GM12878 (cell line): ENCODE measurements at regions of chr16 and their contacts with region 1.

Region 1: GRCh38 chr16:11407047-11407982 is 62.1 kb downstream of the RMI2 start:
- DNase-seq: peak; percentile 45
- ATAC-seq: peak; percentile 74
- H3K4me3 ChIP-seq: no peak overlapping the region
- H3K27ac ChIP-seq: no peak overlapping the region
- H3K4me1 ChIP-seq: no peaks in the 10 kb centered on the region
- H3K27me3 ChIP-seq: no peaks in the 10 kb centered on the region; a peak in 2 of 4 replicates
- CTCF ChIP-seq: peak; percentile 75 to 86 (median 83)
- EP300 ChIP-seq: no peak
- POLR2A ChIP-seq: no peak
- RAD21 ChIP-seq: peak; percentile 88

Region 2: DNA sequence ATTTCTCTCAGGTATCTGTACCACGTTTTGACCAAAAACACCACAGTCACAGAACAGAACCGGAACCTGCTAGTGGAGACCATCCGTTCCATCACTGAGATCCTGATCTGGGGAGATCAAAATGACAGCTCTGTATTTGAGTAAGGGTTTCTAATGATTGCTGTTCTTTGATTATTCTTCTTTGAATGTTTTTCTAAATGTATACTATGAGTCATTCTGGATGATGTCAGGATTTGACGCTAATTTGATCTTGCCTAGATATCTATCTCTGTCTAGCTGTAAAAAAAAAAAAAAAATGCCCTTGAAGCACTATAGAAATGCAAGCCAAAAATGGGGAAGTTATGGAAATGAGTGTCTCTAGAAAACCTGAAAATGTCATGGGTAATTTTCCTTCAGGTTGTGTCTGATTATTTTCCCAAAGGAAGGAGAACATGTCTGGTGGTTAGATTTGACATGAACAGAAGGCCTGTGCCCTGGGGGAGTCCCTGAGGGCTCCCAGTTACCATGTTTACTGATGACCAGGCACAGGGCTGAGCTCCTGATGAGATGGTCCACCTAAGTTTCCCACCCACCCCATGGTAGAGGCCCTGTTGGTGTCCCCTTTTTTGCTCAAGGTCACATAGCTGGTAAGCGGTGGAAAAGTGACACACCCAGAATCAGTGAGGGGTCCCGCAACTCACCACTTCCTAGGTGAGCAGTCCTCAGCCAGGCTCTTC is 449.4 kb before region 1 on chr16:
- CTCF ChIA-PET with region 1: interaction called, 33 read pairs
- POLR2A ChIA-PET with region 1: no interaction called
- RAD21 ChIA-PET with region 1: interaction called, 27 read pairs
- SMC1A ChIA-PET with region 1: interaction called, 22 read pairs
- in situ Hi-C with region 1: no loop called
- intact Hi-C with region 1: loop called (anchors 5 kb)
- DNase-seq: no peak
- ATAC-seq: peak; percentile 75
- H3K4me3 ChIP-seq: no peak overlapping the region
- H3K27ac ChIP-seq: peak overlapping the region; percentile 70
- H3K4me1 ChIP-seq: peaks cover 34% of the 10 kb centered on the region
- H3K27me3 ChIP-seq: no peaks in the 10 kb centered on the region
- CTCF ChIP-seq: no peak
- EP300 ChIP-seq: peak; percentile 30 to 47; a peak in 2 of 4 replicates
- POLR2A ChIP-seq: no peak
- RAD21 ChIP-seq: no peak

Region 3: DNA sequence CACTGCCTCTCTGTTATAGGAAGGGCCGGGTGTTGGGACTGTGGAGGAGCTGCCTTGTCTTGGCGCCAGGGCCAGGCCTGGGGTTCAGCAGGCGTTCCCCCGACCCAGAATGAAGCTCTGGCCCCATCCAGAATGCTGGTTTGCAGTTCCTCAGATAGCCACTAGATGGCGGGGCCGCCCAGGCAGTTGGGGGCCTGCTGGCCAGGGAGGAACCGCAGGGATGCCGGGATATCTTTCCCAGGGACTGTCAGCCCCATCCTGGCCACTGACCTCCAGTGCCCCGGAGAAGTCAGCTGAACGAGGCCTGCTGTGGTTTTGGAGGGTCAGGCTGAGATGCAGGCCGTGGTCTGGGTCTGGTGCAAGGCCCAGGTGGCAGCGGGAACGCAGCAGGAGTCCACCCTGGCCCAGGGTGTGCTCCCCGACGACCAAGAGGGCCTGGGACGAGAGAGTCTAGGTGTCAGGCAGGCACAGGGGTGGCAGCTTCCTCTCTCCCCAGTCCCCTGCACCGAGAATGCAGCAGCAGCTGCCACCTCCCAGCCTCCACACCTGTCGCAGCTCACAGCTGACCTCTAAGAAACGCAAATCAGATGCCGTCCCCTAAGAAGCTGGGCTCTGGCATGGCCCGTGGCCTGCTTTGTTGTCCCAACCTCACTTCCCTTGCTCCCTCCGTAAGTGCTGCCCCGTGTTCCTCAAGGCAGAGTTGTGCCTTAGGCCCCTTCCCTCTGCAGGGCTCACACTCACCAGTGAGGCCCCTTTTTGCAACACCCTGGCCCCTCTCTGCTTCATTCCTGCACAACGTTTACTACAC is 10.9 kb before region 1 on chr16:
- CTCF ChIA-PET with region 1: interaction called, 76 read pairs
- POLR2A ChIA-PET with region 1: no interaction called
- RAD21 ChIA-PET with region 1: interaction called, 9 read pairs
- SMC1A ChIA-PET with region 1: interaction called, 21 read pairs
- in situ Hi-C with region 1: no loop called
- intact Hi-C with region 1: no loop called
- DNase-seq: no peak
- ATAC-seq: peak; percentile 90
- H3K4me3 ChIP-seq: no peak overlapping the region
- H3K27ac ChIP-seq: no peak overlapping the region
- H3K4me1 ChIP-seq: no peaks in the 10 kb centered on the region
- H3K27me3 ChIP-seq: no peaks in the 10 kb centered on the region; a peak in 1 of 4 replicates
- CTCF ChIP-seq: peak; percentile 97 to 98 (median 97); a peak in 5 of 6 replicates
- EP300 ChIP-seq: no peak
- POLR2A ChIP-seq: no peak
- RAD21 ChIP-seq: peak; percentile 97

Region 4: GRCh38 chr16:11530171-11530940 is 123.0 kb after region 1 on chr16:
- CTCF ChIA-PET with region 1: interaction called, 80 read pairs
- POLR2A ChIA-PET with region 1: no interaction called
- RAD21 ChIA-PET with region 1: interaction called, 17 read pairs
- SMC1A ChIA-PET with region 1: interaction called, 52 read pairs
- in situ Hi-C with region 1: no loop called
- intact Hi-C with region 1: loop called (anchors 2 kb)
- DNase-seq: no peak
- ATAC-seq: no peak
- H3K4me3 ChIP-seq: no peak overlapping the region
- H3K27ac ChIP-seq: no peak overlapping the region
- H3K4me1 ChIP-seq: no peaks in the 10 kb centered on the region
- H3K27me3 ChIP-seq: peaks cover 0 to 4% of the 10 kb centered on the region in 2 experiments; a peak in 2 of 4 replicates
- CTCF ChIP-seq: no peak
- EP300 ChIP-seq: no peak
- POLR2A ChIP-seq: no peak
- RAD21 ChIP-seq: no peak

Region 5: DNA sequence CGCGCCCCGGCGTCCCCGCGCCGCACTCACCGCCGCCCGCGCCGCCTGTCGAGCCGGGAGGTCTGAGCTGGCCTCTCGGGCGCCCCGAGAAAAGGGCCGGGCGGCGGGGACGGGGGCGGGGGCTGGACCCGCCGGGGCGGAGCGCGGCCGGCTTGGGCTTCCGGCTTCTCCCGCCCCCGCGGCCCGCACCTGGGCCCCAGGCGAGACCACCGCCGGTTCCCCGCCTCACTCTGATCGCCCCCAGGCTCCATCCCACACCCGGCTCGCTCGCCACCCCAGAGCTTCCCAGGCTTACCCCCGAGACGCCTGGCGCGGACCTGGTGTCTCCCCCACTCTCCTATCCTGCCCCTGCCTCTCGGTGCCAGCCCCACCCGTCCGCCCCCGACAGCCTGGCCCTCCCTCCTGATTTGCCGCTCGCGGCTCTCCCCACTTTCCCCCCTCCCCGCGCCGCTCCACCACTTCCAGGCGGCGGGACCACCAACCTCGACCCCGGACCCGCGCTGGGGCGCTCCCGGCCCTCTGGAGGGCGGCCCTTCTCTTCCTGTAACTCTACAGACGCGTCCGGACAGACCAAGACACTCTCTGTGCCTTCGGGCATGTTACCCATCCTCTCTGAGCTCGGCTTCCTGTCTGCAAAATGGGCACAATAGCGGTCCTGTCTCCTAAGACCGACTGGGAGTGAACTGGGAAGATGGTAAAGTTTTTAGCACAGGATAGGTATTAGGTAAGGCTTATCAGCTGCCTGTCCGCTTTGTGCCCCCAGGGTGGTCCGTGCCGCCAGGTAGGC is 179.7 kb after region 1 on chr16 and contains the start of gene LITAF:
- CTCF ChIA-PET with region 1: interaction called, 22 read pairs
- POLR2A ChIA-PET with region 1: no interaction called
- RAD21 ChIA-PET with region 1: interaction called, 16 read pairs
- SMC1A ChIA-PET with region 1: interaction called, 8 read pairs
- in situ Hi-C with region 1: no loop called
- intact Hi-C with region 1: no loop called
- DNase-seq: no peak
- ATAC-seq: peak; percentile 78
- H3K4me3 ChIP-seq: peak within 1 kb of the TSS; percentile 97
- H3K27ac ChIP-seq: peak within 1 kb of the TSS; percentile 92
- H3K4me1 ChIP-seq: peaks cover 10% of the 10 kb centered on the region; the same call in 1 of the 2 replicates
- H3K27me3 ChIP-seq: no peaks in the 10 kb centered on the region
- CTCF ChIP-seq: peak in 1 of 3 experiments; percentile 19; a peak in 1 of 6 replicates
- EP300 ChIP-seq: no peak
- POLR2A ChIP-seq: peak; percentile 81
- RAD21 ChIP-seq: peak; percentile 33; the same call in 1 of the 2 replicates
- polyA plus RNA-seq, gene LITAF: 144 to 195 TPM

Region 6: DNA sequence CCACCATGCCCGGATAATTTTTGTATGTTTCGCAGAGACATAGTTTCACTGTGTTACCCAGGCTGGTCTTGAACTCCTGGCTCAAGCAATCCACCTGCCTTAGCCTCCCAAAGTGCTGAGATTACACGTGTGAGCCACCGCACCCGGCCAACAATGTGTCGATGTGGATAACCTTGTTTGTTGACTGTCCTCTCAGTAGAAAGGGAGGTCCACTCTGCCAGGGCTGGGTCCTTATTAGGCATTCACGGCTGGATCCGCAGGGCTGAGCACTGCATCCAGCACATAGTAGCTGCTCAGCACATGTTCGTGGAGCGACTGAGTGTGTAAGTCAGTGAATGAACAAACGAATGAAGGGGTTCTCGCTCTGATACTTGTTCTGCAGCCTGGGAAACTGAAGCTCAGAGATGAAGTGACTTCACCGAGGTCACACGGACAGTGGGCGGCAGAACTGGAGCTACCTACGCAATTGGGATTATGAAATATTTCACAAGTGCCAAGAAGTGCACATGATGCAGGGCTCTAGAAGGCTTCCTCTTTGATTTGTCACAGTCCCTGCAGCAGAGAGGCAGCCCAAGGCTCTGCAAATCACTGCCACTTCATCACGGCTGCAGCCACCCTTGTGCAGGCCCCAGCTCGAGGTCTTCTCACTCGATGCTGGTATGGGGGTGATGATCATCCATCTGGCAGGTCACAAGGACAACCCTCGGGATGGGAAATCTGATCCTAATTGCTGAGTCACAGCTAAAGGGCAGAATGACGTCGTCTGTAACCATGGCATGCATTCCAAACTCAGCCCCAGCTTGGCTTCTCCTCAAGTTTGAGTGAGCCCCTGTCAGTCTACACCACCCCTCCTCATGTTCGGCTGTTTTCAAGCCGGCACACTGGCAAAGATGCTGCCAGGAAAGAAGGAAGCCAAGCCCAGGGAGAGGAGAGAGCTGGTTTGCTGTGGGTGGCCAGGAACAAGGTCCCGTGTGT is 232.9 kb after region 1 on chr16:
- CTCF ChIA-PET with region 1: interaction called, 82 read pairs
- POLR2A ChIA-PET with region 1: interaction called, 4 read pairs
- RAD21 ChIA-PET with region 1: interaction called, 12 read pairs
- SMC1A ChIA-PET with region 1: interaction called, 32 read pairs
- in situ Hi-C with region 1: loop called (anchors 10 kb)
- intact Hi-C with region 1: loop called (anchors 5 kb)
- DNase-seq: no peak
- ATAC-seq: peak; percentile 15; the same call in 1 of the 3 replicates
- H3K4me3 ChIP-seq: no peak overlapping the region
- H3K27ac ChIP-seq: no peak overlapping the region
- H3K4me1 ChIP-seq: no peaks in the 10 kb centered on the region
- H3K27me3 ChIP-seq: no peaks in the 10 kb centered on the region; a peak in 1 of 4 replicates
- CTCF ChIP-seq: no peak
- EP300 ChIP-seq: no peak
- POLR2A ChIP-seq: no peak
- RAD21 ChIP-seq: no peak

Region 7: DNA sequence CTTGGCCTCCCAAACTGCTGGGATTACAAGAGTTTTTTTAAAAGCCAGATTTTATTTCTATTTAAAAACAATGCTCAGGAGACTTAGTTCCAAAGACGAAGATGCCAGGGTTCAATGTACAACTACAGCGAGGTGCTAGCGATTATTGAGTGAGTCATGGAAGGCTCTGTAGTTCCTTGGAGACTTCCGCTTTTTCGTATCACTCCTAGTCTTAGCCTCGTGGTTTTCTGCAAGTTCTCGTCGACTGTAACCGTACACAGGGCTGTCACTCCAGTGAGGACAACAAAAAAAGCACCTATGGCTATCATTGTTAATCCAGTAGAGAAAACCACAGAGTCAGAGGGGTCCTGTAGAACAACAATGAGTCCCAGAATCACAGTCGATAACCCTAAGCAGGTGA is 412.5 kb after region 1 on chr16:
- CTCF ChIA-PET with region 1: interaction called, 4 read pairs
- POLR2A ChIA-PET with region 1: interaction called, 3 read pairs
- RAD21 ChIA-PET with region 1: interaction called, 3 read pairs
- SMC1A ChIA-PET with region 1: no interaction called
- in situ Hi-C with region 1: loop called (anchors 5 kb)
- intact Hi-C with region 1: no loop called
- DNase-seq: no peak
- ATAC-seq: peak; percentile 57
- H3K4me3 ChIP-seq: no peak overlapping the region
- H3K27ac ChIP-seq: no peak overlapping the region
- H3K4me1 ChIP-seq: no peaks in the 10 kb centered on the region
- H3K27me3 ChIP-seq: no peaks in the 10 kb centered on the region
- CTCF ChIP-seq: no peak
- EP300 ChIP-seq: no peak
- POLR2A ChIP-seq: no peak
- RAD21 ChIP-seq: no peak